ENCODE measurements at regions of chr1 and their contacts with region 1.

Region 1: DNA sequence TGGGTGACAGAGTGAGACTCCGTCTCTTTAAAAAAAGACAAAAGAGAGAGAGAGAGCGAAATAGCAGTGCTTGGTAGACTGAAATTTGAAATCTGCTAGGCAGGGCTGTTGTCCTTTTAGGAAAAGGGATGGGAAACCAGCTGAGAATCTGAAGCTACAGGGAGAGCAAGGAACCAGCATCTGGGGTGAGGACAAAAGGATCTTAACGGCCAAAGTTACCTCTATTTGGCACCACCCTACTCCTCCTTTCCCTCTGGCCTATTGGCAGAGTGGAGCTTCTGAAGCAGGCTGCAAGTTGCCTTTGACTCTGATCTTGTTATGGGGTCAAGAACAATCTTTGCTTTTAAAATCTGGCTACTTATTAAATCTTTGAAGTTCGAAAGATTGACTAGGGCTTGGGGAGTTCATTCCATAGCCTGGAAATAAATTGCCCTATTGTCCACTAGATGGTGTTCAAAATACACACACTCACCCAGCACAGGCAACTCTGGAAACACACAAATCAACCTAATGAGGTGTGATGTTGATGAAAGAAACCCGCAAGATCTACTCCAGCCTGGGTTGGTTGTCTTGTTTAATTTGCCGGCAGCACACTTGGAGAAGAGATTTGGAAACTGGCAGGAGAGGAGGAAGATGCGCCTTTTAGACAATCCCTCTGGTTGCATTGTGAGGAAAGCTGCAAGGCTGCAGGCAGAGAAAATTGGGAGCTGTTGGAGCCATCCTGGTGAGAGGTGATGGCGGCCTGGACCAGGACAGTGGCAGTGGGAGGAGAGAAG is 16.5 kb upstream of the PARP1 start:
- DNase-seq: no peak
- H3K4me3 Mint-ChIP-seq: no peak overlapping the region
- H3K27ac Mint-ChIP-seq: no peak overlapping the region
- H3K4me1 Mint-ChIP-seq: peaks cover 10% of the 10 kb centered on the region
- H3K27me3 Mint-ChIP-seq: peaks cover 3% of the 10 kb centered on the region

Region 2: GRCh38 chr1:226444901-226445300 is 20.5 kb after region 1 on chr1:
- CTCF ChIA-PET with region 1: interaction called, 22 read pairs
- POLR2A ChIA-PET with region 1: interaction called, 5 read pairs
- DNase-seq: peak; percentile 83
- H3K4me3 Mint-ChIP-seq: no peak overlapping the region
- H3K27ac Mint-ChIP-seq: peak overlapping the region; percentile 27
- H3K4me1 Mint-ChIP-seq: peaks cover 31% of the 10 kb centered on the region
- H3K27me3 Mint-ChIP-seq: peaks cover 21% of the 10 kb centered on the region

Region 3: GRCh38 chr1:226589008-226589733 is 164.8 kb after region 1 on chr1:
- CTCF ChIA-PET with region 1: no interaction called
- POLR2A ChIA-PET with region 1: no interaction called
- DNase-seq: no peak
- H3K4me3 Mint-ChIP-seq: no peak overlapping the region
- H3K27ac Mint-ChIP-seq: no peak overlapping the region
- H3K4me1 Mint-ChIP-seq: no peaks in the 10 kb centered on the region
- H3K27me3 Mint-ChIP-seq: peaks cover 14% of the 10 kb centered on the region

Region 4: DNA sequence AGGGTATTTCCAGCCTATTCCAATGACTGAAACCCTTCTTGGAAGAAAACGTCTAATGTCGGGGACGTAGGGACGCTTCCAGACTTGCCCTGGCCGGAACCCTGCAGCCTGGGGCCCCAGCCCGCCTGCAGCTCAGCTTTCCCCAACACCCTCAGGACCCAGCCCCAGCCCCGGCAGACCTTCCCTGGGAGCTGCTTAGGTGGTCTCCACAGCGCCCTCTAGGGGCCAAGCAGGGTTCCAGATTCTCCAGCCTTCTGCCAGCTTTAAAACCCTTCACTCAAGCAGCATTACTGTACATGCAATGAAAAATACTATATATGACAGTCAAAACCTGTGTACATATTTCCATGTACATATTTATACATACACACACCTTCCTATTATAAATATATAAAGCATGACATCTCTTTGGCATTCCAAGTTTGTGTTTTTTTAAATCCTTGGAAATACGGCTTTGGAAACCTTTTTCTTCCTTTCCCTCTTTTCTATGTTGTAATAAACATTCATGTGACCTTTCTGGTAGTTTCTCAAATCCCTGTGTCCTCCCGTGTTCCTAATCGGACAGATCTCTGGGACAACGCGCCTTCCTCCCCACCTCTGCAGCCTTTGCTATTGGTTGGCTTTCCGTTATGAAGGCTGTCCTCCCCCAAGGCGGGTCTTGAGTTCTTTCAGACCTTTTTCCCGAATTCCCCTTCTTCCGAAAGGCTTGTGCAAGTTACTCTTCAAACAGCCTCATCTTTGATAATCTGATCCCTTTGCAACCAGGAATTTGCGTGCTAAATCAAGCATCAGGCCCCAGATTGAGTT is 184.5 kb after region 1 on chr1:
- CTCF ChIA-PET with region 1: interaction called, 14 read pairs
- POLR2A ChIA-PET with region 1: no interaction called
- DNase-seq: peak; percentile 70
- H3K4me3 Mint-ChIP-seq: no peak overlapping the region
- H3K27ac Mint-ChIP-seq: no peak overlapping the region
- H3K4me1 Mint-ChIP-seq: no peaks in the 10 kb centered on the region
- H3K27me3 Mint-ChIP-seq: peaks cover 3% of the 10 kb centered on the region